ENCODE measurements at regions of chr11 and their contacts with region 1.

Region 1: GRCh38 chr11:70364745-70365543 is 33.4 kb upstream of the CTTN start:
- DNase-seq: peak; percentile 60
- H3K4me3 Mint-ChIP-seq: peak overlapping the region; percentile 75
- H3K27ac Mint-ChIP-seq: peak overlapping the region; percentile 97
- H3K4me1 Mint-ChIP-seq: peaks cover 28% of the 10 kb centered on the region
- H3K27me3 Mint-ChIP-seq: no peaks in the 10 kb centered on the region

Region 2: GRCh38 chr11:70333261-70333660 is 31.7 kb before region 1 on chr11:
- intact Hi-C with region 1: no loop called
- DNase-seq: no peak
- H3K4me3 Mint-ChIP-seq: no peak overlapping the region
- H3K27ac Mint-ChIP-seq: no peak overlapping the region
- H3K4me1 Mint-ChIP-seq: peaks cover 6% of the 10 kb centered on the region
- H3K27me3 Mint-ChIP-seq: no peaks in the 10 kb centered on the region

Region 3: GRCh38 chr11:70397983-70398833 is 33.3 kb after region 1 on chr11 and contains the start of gene CTTN:
- intact Hi-C with region 1: loop called (anchors 1 kb)
- DNase-seq: peak; percentile 42
- H3K4me3 Mint-ChIP-seq: peak within 1 kb of the TSS; percentile 87
- H3K27ac Mint-ChIP-seq: peak within 1 kb of the TSS; percentile 77
- H3K4me1 Mint-ChIP-seq: peaks cover 24% of the 10 kb centered on the region
- H3K27me3 Mint-ChIP-seq: peaks cover 58% of the 10 kb centered on the region
- total RNA-seq, gene CTTN: 51.4 and 53.7 TPM in 2 replicates

Region 4: GRCh38 chr11:70423523-70424505 is 58.9 kb after region 1 on chr11:
- intact Hi-C with region 1: loop called (anchors 1 kb)
- DNase-seq: no peak
- H3K4me3 Mint-ChIP-seq: no peak overlapping the region
- H3K27ac Mint-ChIP-seq: peak overlapping the region; percentile 40
- H3K4me1 Mint-ChIP-seq: peaks cover 4% of the 10 kb centered on the region
- H3K27me3 Mint-ChIP-seq: no peaks in the 10 kb centered on the region

Measured in activated T-helper 1 cell treated with anti-CD3 and anti-CD28 coated beads, Interleukin-12 subunit alpha, Interleukin-12 subunit beta, Interleukin-2, Interleukin-4 antibody, amounts not matched to agents 30 ng/mL and 10 ng/mL and 1 ng/mL, durations not matched to agents 14 hours and 24 hours and 36 hours (primary cell).